ENCODE measurements at regions of chr17 and their contacts with region 1.

Region 1: DNA sequence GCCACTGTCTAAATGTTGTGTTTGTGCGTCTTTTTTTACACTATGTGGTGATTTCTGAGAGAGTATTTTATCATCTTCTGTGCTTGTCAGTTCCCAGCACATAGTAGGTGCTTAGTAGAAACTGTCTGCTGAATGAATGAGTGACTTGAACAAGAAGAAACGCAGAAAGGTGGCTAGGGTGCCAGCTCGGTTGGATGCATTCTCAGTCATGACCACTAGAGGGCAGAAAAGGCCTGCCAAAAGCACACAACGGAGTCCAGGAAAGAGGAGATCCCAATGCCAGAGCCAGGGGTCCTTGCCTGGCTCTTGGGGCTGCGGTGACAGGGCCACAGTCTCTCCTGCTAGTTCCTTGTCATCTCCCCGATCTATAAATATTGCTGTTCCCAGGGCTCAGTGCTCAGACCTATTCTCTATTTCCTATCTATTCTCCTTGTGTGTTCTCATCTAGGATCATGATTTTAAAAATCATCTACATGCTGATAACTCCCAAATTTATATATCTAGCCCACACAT is 57.3 kb upstream of the CCL1 start:
- DNase-seq: peak; percentile 76
- ATAC-seq: peak; percentile 37
- H3K4me3 Mint-ChIP-seq: no peak overlapping the region
- H3K27ac Mint-ChIP-seq: no peak overlapping the region
- H3K4me1 Mint-ChIP-seq: peaks cover 2% of the 10 kb centered on the region
- H3K27me3 Mint-ChIP-seq: peaks cover 30% of the 10 kb centered on the region
- CTCF ChIP-seq: peak; percentile 95

Region 2: GRCh38 chr17:34401165-34401564 is 19.1 kb before region 1 on chr17:
- CTCF ChIA-PET with region 1: interaction called, 10 read pairs
- POLR2A ChIA-PET with region 1: no interaction called
- intact Hi-C with region 1: no loop called
- DNase-seq: no peak
- ATAC-seq: no peak
- H3K4me3 Mint-ChIP-seq: no peak overlapping the region
- H3K27ac Mint-ChIP-seq: no peak overlapping the region
- H3K4me1 Mint-ChIP-seq: no peaks in the 10 kb centered on the region
- H3K27me3 Mint-ChIP-seq: peaks cover 10% of the 10 kb centered on the region
- CTCF ChIP-seq: no peak

Region 3: DNA sequence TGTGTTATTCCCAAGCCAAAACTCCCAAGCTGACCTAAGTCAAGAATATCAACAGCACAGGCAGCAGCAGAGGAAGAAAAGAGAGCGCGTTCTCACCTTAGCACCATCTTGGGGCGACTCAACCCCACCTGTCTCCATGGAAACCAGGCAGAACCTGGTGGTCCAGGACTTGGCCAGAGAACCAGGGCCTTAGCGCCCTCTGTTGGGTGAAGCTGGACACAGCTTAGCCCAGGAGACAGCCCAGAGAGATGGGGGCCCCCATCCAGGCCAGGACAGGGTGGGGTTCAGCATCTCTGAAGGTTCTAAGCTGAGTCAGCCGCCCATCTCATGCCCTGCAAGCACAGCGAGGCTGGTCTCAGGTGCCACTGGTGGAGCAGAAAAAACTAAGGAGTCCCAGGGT is 99.0 kb after region 1 on chr17:
- CTCF ChIA-PET with region 1: interaction called, 8 read pairs
- POLR2A ChIA-PET with region 1: no interaction called
- intact Hi-C with region 1: loop called (anchors 5 kb)
- DNase-seq: peak; percentile 52
- ATAC-seq: peak; percentile 74
- H3K4me3 Mint-ChIP-seq: no peak overlapping the region
- H3K27ac Mint-ChIP-seq: no peak overlapping the region
- H3K4me1 Mint-ChIP-seq: no peaks in the 10 kb centered on the region
- H3K27me3 Mint-ChIP-seq: peaks cover 5% of the 10 kb centered on the region
- CTCF ChIP-seq: peak; percentile 70

Measured in activated CD8-positive, alpha-beta T cell treated with anti-CD3 and anti-CD28 coated beads for 36 hours (primary cell).